Activated naive CD4-positive, alpha-beta T cell treated with anti-CD3 and anti-CD28 coated beads for 36 hours (primary cell): ENCODE measurements at regions of chr3 and their contacts with region 1.

Region 1: DNA sequence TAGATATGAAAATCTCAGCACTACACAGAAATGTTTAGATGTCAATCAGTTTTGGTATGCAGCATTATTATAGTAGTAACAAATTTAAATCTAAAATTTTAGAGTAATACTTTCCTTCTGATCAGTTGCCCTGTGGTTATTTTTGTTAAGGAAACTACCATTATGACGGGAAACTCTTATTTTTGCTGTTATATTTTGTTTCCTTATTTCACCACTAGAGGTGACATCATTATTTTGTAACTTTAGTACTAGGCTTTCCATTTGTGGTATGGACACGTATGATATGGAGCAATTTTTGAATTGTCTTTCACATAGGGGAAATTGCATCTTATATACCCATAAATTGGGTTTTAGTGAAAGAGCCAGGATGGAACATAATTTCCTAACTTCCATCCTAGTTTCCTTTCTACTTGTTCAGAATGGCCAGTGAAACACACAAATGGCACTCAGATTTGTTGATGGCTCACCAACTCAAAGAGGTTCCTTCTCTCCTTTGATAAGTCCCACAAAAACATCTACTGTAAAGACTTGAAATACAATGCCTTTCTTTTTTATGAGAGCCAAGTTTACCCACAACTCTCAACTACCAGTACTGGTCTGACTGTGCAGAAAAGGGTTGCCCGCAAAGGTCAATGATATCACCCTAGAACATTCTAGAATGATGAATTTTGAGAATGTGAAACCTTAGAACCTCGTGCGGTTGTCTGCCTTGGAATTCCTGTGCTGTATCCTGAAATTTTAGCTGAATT is 19.4 kb upstream of the PPP4R2 start:
- DNase-seq: peak; percentile 21
- H3K4me3 Mint-ChIP-seq: no peak overlapping the region
- H3K27ac Mint-ChIP-seq: no peak overlapping the region
- H3K4me1 Mint-ChIP-seq: peaks cover 10% of the 10 kb centered on the region
- H3K27me3 Mint-ChIP-seq: no peaks in the 10 kb centered on the region

Region 2: GRCh38 chr3:72872183-72872582 is 105.1 kb before region 1 on chr3:
- CTCF ChIA-PET with region 1: no interaction called
- intact Hi-C with region 1: no loop called
- DNase-seq: no peak
- H3K4me3 Mint-ChIP-seq: no peak overlapping the region
- H3K27ac Mint-ChIP-seq: no peak overlapping the region
- H3K4me1 Mint-ChIP-seq: no peaks in the 10 kb centered on the region
- H3K27me3 Mint-ChIP-seq: peaks cover 2% of the 10 kb centered on the region

Region 3: GRCh38 chr3:72951259-72951722 is 25.9 kb before region 1 on chr3:
- CTCF ChIA-PET with region 1: no interaction called
- intact Hi-C with region 1: loop called (anchors 2 kb)
- DNase-seq: no peak
- H3K4me3 Mint-ChIP-seq: no peak overlapping the region
- H3K27ac Mint-ChIP-seq: no peak overlapping the region
- H3K4me1 Mint-ChIP-seq: peaks cover 12% of the 10 kb centered on the region
- H3K27me3 Mint-ChIP-seq: no peaks in the 10 kb centered on the region

Region 4: DNA sequence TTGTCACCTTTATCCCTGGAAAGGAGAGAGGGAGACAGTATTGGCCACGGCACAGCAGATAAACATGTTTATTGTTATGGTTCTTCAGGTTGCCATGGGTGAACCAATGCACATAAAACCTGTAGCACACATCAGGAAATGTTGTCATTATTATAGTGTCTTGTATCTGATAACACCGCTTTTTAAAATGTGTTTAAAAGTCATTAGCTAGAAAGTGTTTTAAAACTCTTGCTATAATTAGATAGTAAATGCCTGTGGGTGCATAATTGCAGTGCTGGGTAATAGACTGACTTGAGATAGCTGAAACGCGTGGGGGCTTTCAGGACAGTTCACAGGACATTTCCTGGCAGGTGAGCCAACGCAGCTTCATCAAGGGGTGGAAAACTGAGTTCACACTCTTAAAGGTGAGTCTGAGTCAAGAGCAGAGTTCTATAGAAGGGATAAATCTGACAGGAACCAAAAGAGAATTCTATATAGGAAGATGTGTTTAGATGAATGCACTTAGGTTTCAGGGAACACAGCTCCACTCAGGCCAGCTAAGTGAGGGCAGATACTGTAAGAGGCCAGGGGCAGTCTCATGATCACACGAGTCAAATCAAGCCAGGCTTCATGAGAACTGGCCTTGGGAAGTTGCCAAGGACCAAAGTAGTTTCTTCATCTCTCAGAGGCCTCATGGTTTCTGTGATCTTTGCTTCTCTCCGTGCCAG is 16.3 kb before region 1 on chr3:
- CTCF ChIA-PET with region 1: interaction called, 4 read pairs
- intact Hi-C with region 1: loop called (anchors 1 kb)
- DNase-seq: no peak
- H3K4me3 Mint-ChIP-seq: no peak overlapping the region
- H3K27ac Mint-ChIP-seq: no peak overlapping the region
- H3K4me1 Mint-ChIP-seq: peaks cover 28% of the 10 kb centered on the region
- H3K27me3 Mint-ChIP-seq: no peaks in the 10 kb centered on the region

Region 5: DNA sequence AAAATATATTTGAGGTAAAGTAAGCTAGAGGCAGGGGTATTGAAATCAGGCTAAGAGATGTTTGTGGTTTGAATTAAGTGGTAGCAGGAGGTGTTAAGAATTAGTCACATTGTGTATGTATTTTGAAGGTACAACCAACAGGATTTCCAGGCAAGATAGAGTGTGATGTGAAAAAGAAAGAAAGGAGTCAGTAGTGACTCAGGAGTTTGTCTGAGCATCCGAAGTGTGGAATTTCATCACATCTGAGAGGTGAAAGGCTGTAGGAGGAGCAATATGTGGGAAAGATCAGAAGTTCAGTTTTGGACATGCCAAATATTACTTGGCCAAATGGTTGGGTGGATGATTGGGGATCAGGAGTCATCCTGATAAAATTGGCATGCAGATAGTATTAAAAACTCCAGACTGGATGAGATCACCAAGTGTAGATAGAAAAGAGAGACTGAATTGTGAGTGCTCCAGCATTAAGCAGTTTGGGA is 52.1 kb after region 1 on chr3:
- CTCF ChIA-PET with region 1: no interaction called
- intact Hi-C with region 1: loop called (anchors 1 kb)
- DNase-seq: no peak
- H3K4me3 Mint-ChIP-seq: no peak overlapping the region
- H3K27ac Mint-ChIP-seq: peak overlapping the region; percentile 10
- H3K4me1 Mint-ChIP-seq: peaks cover 80% of the 10 kb centered on the region
- H3K27me3 Mint-ChIP-seq: no peaks in the 10 kb centered on the region

Region 6: DNA sequence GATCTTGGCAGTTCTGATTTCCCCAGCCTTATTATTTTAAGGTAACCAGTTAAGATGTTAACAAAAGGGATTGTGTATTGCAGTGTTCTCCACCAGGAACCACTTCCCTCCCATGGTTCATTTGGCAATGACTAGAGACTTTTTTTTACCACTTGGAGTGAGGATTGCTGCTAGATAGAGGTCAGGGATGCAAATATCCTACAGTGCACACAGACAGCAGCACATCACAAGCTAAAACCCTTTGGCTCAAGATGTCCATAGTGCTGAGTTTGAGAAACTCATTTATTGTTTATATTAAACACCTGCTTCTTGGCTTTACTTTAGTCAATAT is 60.1 kb after region 1 on chr3:
- CTCF ChIA-PET with region 1: no interaction called
- intact Hi-C with region 1: loop called (anchors 2 kb)
- DNase-seq: no peak
- H3K4me3 Mint-ChIP-seq: no peak overlapping the region
- H3K27ac Mint-ChIP-seq: peak overlapping the region; percentile 16
- H3K4me1 Mint-ChIP-seq: peaks cover 89% of the 10 kb centered on the region
- H3K27me3 Mint-ChIP-seq: no peaks in the 10 kb centered on the region